GM12878 (cell line): ENCODE measurements at regions of chr2 and their contacts with region 1.

Region 1: GRCh38 chr2:147636238-147636882 is 208.5 kb upstream of the ACVR2A start:
- DNase-seq: no peak
- ATAC-seq: peak; percentile 9
- H3K4me3 ChIP-seq: no peak overlapping the region; the same call in 1 of the 2 replicates
- H3K27ac ChIP-seq: peak overlapping the region; percentile 59
- H3K4me1 ChIP-seq: peaks cover 64% of the 10 kb centered on the region
- H3K27me3 ChIP-seq: no peaks in the 10 kb centered on the region
- CTCF ChIP-seq: no peak
- EP300 ChIP-seq: 0 out of 4 replicates have a peak, but pooled peaks of 1 of the 2 experiments have one; percentile 20
- POLR2A ChIP-seq: no peak
- RAD21 ChIP-seq: no peak

Region 2: DNA sequence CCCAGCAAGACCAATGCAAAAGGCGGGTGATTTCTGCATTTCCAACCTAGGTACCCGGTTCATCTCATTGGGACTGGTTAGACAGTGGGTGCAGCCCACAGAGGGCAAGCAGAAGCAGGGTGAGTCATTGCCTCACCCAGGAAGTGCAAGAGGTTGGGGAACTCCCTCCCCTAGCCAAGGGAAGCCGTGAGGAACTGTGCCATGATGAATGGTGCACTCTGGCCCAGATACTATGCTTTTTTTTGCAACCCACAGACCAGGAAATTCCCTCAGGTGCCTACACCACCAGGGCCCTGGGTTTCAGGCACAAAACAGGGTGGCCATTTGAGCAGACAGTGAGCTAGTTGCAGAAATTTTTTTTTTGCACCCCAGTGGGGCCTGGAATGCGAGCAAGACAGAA is 454.1 kb before region 1 on chr2:
- CTCF ChIA-PET with region 1: no interaction called
- POLR2A ChIA-PET with region 1: no interaction called
- RAD21 ChIA-PET with region 1: no interaction called
- SMC1A ChIA-PET with region 1: no interaction called
- in situ Hi-C with region 1: no loop called
- intact Hi-C with region 1: loop called (anchors 10 kb)
- DNase-seq: peak; percentile 84
- ATAC-seq: peak; percentile 92
- H3K4me3 ChIP-seq: no peak overlapping the region
- H3K27ac ChIP-seq: peak overlapping the region; percentile 85
- H3K4me1 ChIP-seq: peaks cover 16% of the 10 kb centered on the region
- H3K27me3 ChIP-seq: no peaks in the 10 kb centered on the region
- CTCF ChIP-seq: no peak
- EP300 ChIP-seq: no peak; a peak in 2 of 4 replicates
- POLR2A ChIP-seq: no peak
- RAD21 ChIP-seq: peak; percentile 18; the same call in 1 of the 2 replicates

Region 3: GRCh38 chr2:147660680-147661079 is 24.3 kb after region 1 on chr2:
- CTCF ChIA-PET with region 1: interaction called, 3 read pairs
- POLR2A ChIA-PET with region 1: interaction called, 8 read pairs
- RAD21 ChIA-PET with region 1: interaction called, 4 read pairs
- SMC1A ChIA-PET with region 1: interaction called, 13 read pairs
- in situ Hi-C with region 1: no loop called
- intact Hi-C with region 1: no loop called
- DNase-seq: no peak
- ATAC-seq: no peak
- H3K4me3 ChIP-seq: no peak overlapping the region
- H3K27ac ChIP-seq: no peak overlapping the region
- H3K4me1 ChIP-seq: no peaks in the 10 kb centered on the region; the same call in 1 of the 2 replicates
- H3K27me3 ChIP-seq: no peaks in the 10 kb centered on the region
- CTCF ChIP-seq: no peak
- EP300 ChIP-seq: no peak
- POLR2A ChIP-seq: no peak
- RAD21 ChIP-seq: no peak

Region 4: GRCh38 chr2:147703171-147703570 is 66.8 kb after region 1 on chr2:
- CTCF ChIA-PET with region 1: no interaction called
- POLR2A ChIA-PET with region 1: no interaction called
- RAD21 ChIA-PET with region 1: no interaction called
- SMC1A ChIA-PET with region 1: no interaction called
- in situ Hi-C with region 1: no loop called
- intact Hi-C with region 1: no loop called
- DNase-seq: no peak
- ATAC-seq: no peak
- H3K4me3 ChIP-seq: no peak overlapping the region
- H3K27ac ChIP-seq: no peak overlapping the region
- H3K4me1 ChIP-seq: no peaks in the 10 kb centered on the region
- H3K27me3 ChIP-seq: no peaks in the 10 kb centered on the region
- CTCF ChIP-seq: no peak
- EP300 ChIP-seq: no peak
- POLR2A ChIP-seq: no peak
- RAD21 ChIP-seq: no peak

Region 5: DNA sequence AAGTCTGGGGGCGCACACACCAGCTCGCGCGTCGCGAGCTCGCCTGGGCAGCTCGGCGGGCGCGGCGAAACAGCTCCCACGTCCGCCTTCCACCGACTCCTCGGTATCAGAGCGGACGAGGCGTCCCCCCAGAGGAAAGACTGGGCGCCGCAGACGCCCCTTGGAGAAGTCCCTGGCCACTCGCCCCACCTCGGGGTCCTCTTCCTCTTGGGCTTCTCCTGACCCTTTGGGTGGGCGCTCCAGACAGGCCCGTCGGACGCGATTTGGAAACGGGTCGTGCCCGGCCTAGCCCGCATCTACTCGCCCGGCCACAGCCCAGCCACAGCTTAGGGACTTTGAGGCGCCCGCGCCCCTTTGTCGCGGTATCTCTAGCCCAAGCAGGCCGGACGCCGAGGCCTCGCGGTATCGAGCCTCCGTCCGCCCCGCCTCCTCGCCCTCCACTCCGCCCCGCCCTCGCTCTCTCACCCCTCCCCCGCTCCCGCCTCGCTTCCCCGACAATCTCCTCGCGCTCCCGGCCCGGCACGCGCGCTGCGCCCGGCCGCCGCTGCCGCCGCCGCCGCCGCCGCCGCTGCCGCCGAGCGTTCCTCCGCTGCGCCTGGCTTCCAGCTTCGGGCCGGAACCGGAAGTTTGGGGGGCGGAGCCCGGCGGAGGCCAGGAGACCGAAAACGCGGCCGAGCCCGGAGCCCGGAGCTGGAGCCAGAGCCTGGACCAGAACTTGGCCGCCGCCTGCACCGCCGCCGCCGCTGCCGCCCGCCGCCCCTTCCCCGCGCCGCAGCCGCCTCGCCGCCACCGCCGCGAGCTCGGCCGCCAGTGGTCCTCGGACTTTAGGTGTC is 207.7 kb after region 1 on chr2:
- CTCF ChIA-PET with region 1: no interaction called
- POLR2A ChIA-PET with region 1: no interaction called
- RAD21 ChIA-PET with region 1: interaction called, 5 read pairs
- SMC1A ChIA-PET with region 1: no interaction called
- in situ Hi-C with region 1: no loop called
- intact Hi-C with region 1: loop called (anchors 5 kb)
- DNase-seq: no peak
- ATAC-seq: peak; percentile 74
- H3K4me3 ChIP-seq: peak overlapping the region; percentile 71
- H3K27ac ChIP-seq: no peak overlapping the region
- H3K4me1 ChIP-seq: no peaks in the 10 kb centered on the region; the same call in 1 of the 2 replicates
- H3K27me3 ChIP-seq: peaks cover 0 to 6% of the 10 kb centered on the region in 2 experiments; a peak in 1 of 4 replicates
- CTCF ChIP-seq: no peak
- EP300 ChIP-seq: no peak
- POLR2A ChIP-seq: peak; percentile 39
- RAD21 ChIP-seq: 0 out of 2 replicates have a peak, but pooled peaks have one; percentile 25

Region 6: GRCh38 chr2:148020111-148021058 is 384.0 kb after region 1 on chr2 and contains the start of gene ORC4:
- CTCF ChIA-PET with region 1: no interaction called
- POLR2A ChIA-PET with region 1: no interaction called
- RAD21 ChIA-PET with region 1: no interaction called
- SMC1A ChIA-PET with region 1: no interaction called
- in situ Hi-C with region 1: no loop called
- intact Hi-C with region 1: loop called (anchors 10 kb)
- DNase-seq: peak; percentile 99
- ATAC-seq: peak; percentile 81
- H3K4me3 ChIP-seq: peak within 1 kb of the TSS; percentile 99
- H3K27ac ChIP-seq: peak within 1 kb of the TSS; percentile 96
- H3K4me1 ChIP-seq: no peaks in the 10 kb centered on the region
- H3K27me3 ChIP-seq: no peaks in the 10 kb centered on the region
- CTCF ChIP-seq: peak in 2 of 3 experiments; percentile 19 to 26; a peak in 2 of 6 replicates
- EP300 ChIP-seq: no peak; a peak in 1 of 4 replicates
- POLR2A ChIP-seq: peak; percentile 90
- RAD21 ChIP-seq: peak; percentile 19; the same call in 1 of the 2 replicates
- polyA plus RNA-seq, gene ORC4: 31.3 to 71.3 TPM